ENCODE measurements at regions of chr6 and their contacts with region 1.

Region 1: DNA sequence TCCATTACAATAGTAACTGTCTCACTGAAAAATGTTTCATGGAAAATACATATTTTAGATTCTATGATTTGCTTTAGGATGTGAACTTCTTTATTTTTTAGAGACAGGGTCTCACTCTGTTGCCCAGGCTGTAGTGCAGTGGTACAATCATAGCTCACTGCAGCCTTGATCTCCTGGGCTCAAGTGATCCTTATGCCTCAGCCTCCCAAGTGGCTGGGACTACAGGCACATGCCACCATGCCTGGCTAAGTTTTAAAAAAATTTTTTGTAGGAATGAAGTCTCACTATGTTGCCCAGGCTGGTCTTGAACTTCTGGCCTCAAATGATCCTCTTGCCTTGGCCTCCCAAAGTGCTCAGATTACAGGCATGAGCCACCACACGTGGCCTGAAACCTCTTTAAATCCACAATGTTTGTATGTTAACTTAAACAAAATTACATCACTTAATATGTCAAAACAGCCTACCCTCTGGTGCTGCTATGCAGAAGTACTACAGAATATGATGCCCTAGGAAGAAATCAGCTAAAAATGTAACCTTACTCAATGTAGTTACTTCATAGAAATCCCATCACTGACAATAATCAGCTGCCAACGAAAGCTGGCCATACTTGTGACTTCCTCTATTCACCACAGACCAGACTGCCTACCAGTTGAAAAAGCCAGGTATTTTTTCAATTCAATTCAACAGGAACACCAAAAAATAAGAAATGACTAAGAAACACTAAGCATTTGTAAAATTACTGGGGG is 17.6 kb downstream of the EEF1A1 start:
- DNase-seq: no peak
- H3K4me3 ChIP-seq: no peak overlapping the region
- H3K27ac ChIP-seq: no peak overlapping the region
- H3K4me1 ChIP-seq: no peaks in the 10 kb centered on the region
- H3K27me3 ChIP-seq: no peaks in the 10 kb centered on the region
- CTCF ChIP-seq: no peak
- EP300 ChIP-seq: no peak
- POLR2A ChIP-seq: no peak
- RAD21 ChIP-seq: no peak

Region 2: DNA sequence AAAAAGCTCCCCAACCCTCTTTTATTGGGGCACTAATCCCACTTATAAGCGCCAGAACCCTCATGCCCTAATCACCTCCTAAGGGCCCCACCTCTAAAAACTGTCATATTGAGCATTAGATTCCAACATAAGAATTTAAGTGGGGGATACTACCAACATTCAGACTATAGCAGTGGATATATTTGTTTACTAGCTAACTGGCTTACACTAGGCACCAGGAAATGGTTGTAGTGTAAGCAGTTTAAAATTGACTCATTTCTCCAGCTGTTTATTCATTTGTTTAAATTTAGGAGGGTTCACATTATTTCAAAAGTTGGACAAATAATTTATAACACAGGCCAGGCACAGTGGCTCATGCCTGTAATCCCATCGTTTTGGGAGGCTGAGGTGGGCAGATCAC is 18.8 kb before region 1 on chr6:
- CTCF ChIA-PET with region 1: interaction called, 3 read pairs
- POLR2A ChIA-PET with region 1: interaction called, 10 read pairs
- DNase-seq: no peak
- H3K4me3 ChIP-seq: no peak overlapping the region
- H3K27ac ChIP-seq: no peak overlapping the region
- H3K4me1 ChIP-seq: no peaks in the 10 kb centered on the region
- H3K27me3 ChIP-seq: no peaks in the 10 kb centered on the region
- CTCF ChIP-seq: no peak
- EP300 ChIP-seq: no peak
- POLR2A ChIP-seq: no peak
- RAD21 ChIP-seq: no peak

Region 3: GRCh38 chr6:73823046-73823735 is 320.0 kb after region 1 on chr6:
- CTCF ChIA-PET with region 1: no interaction called
- POLR2A ChIA-PET with region 1: no interaction called
- DNase-seq: no peak
- H3K4me3 ChIP-seq: no peak overlapping the region
- H3K27ac ChIP-seq: no peak overlapping the region
- H3K4me1 ChIP-seq: no peaks in the 10 kb centered on the region
- H3K27me3 ChIP-seq: no peaks in the 10 kb centered on the region
- CTCF ChIP-seq: no peak
- EP300 ChIP-seq: no peak
- POLR2A ChIP-seq: no peak
- RAD21 ChIP-seq: no peak